ENCODE measurements at regions of chrX and their contacts with region 1.

Region 1: GRCh38 chrX:68828740-68829552 is at the start of gene EFNB1:
- DNase-seq: peak; percentile 92 to 97
- H3K4me3 ChIP-seq: peak within 1 kb of the TSS; percentile 50
- CTCF ChIP-seq: no peak
- POLR2A ChIP-seq: no peak
- total RNA-seq, gene EFNB1: 97.8 to 109 (median 102) TPM

Region 2: DNA sequence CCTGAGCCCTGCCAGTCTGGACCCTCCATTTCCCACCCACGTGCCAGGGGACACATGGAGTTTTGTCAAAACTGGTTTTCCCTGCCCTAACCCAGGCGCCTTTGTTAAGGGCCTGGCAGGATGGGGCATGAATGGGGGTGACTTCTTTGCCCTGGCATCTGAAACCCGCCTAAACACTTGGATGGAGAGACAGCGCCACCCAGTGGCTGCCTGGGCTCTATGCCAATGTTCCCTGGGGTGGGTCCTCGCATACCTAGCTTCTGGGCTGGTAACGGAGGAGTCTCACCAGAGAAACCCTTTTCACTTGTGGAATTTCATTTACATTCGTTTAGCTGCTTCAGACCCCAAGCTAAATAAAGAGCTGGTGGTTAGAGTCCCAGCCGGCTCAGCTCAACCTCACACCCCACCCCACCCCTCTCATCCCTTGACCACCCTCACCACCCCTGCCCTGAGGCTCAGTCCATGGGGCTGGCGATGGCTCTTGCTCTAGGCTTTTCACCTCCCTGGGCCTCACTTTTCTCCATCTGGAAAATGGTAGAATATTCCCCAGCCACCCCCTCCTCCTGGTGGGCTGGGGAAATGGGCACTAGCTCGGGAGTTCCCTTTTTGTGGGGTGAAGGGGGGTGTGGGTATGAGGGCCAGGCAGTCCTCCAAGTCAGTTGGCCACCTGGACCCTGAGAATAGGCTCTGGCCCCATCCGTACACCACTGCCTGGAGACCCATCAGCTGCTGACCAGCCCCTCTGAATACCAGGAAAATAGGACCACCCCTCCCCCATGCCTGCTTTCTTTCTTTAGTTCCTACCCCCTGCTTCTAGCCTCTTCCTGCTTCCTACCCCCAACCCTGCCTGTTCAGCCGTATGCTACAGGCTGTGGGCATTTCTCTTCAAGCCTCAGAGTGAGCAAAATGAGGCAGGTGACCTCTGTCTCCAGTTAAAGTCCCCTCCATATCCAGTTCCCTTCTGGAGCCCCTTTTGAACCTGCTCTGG is 393.5 kb after region 1 on chrX:
- intact Hi-C with region 1: loop called (anchors 5 kb)
- DNase-seq: peak; percentile 53 to 92
- H3K4me3 ChIP-seq: no peak overlapping the region
- CTCF ChIP-seq: no peak
- POLR2A ChIP-seq: no peak

Region 3: GRCh38 chrX:69285881-69286564 is 457.1 kb after region 1 on chrX:
- intact Hi-C with region 1: loop called (anchors 10 kb)
- DNase-seq: peak; percentile 37 to 92
- H3K4me3 ChIP-seq: no peak overlapping the region
- CTCF ChIP-seq: no peak
- POLR2A ChIP-seq: no peak

Measured in lower leg skin (tissue), 4 donors.